Naive thymus-derived CD4-positive, alpha-beta T cell (primary cell): ENCODE measurements at regions of chr12 and their contacts with region 1.

Region 1: DNA sequence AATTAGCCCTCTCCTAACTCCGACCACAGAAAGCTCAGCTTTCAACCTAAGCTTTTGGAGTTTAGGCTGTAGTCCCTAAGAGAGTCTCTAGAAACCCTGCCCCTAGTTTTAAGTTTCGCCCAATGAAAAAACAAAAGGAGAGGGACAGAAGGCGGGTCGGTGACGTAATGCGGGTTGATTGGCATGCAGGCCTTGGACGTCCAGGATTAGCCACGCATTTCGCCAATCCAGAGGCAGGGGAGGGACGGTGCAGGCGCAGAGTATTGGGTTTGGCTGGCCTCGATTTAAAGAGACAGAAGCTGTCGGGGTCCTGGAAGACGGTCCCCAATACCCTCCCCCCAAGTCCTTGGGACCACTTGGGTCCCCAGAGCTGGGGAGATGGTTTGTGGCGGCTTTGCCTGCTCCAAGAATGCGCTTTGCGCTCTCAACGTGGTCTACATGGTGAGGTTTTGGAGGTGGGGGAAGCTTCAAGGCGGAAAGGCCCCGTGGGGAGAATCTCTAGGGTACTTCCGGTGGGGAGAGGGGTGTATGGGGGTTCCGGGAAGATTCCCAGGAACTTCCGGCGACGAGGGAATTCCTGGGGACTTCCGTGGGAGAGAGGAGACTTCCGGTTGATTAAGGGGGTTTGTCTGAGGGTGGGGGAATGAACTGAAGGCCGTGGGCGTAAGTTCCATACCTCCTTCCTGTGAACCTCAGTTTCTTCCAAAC is at the start of gene TSPAN31:
- DNase-seq: peak; percentile 70 to 97 (median 94)
- ATAC-seq: peak; percentile 89
- H3K4me3 ChIP-seq: peak within 1 kb of the TSS; percentile 92
- H3K4me3 Mint-ChIP-seq: peak within 1 kb of the TSS; percentile 82 to 100 (median 91)
- H3K27ac ChIP-seq: peak within 1 kb of the TSS; percentile 91
- H3K27ac Mint-ChIP-seq: peak within 1 kb of the TSS; percentile 88 to 97 (median 95)
- H3K4me1 ChIP-seq: peaks cover 33 to 34% of the 10 kb centered on the region in 2 donors
- H3K4me1 Mint-ChIP-seq: peaks cover 35 to 64% (median 52%) of the 10 kb centered on the region in 7 donors
- H3K27me3 ChIP-seq: no peaks in the 10 kb centered on the region
- H3K27me3 Mint-ChIP-seq: no peaks in the 10 kb centered on the region
- total RNA-seq, gene TSPAN31: 12.3 to 23.9 (median 20.3) TPM

Region 2: GRCh38 chr12:57476162-57476992 is 268.6 kb before region 1 on chr12:
- CTCF ChIA-PET with region 1: no interaction called
- POLR2A ChIA-PET with region 1: no interaction called
- intact Hi-C with region 1: loop called (anchors 5 kb)
- DNase-seq: peak; percentile 58 to 85 (median 70)
- ATAC-seq: peak; percentile 53
- H3K4me3 ChIP-seq: peak overlapping the region; percentile 95
- H3K4me3 Mint-ChIP-seq: peak overlapping the region; percentile 84 to 100 (median 98)
- H3K27ac ChIP-seq: peak overlapping the region; percentile 94
- H3K27ac Mint-ChIP-seq: peak overlapping the region; percentile 97 to 100 (median 100)
- H3K4me1 ChIP-seq: peaks cover 59 to 70% of the 10 kb centered on the region in 2 donors
- H3K4me1 Mint-ChIP-seq: peaks cover 66 to 85% (median 76%) of the 10 kb centered on the region in 7 donors
- H3K27me3 ChIP-seq: no peaks in the 10 kb centered on the region
- H3K27me3 Mint-ChIP-seq: no peaks in the 10 kb centered on the region

Region 3: DNA sequence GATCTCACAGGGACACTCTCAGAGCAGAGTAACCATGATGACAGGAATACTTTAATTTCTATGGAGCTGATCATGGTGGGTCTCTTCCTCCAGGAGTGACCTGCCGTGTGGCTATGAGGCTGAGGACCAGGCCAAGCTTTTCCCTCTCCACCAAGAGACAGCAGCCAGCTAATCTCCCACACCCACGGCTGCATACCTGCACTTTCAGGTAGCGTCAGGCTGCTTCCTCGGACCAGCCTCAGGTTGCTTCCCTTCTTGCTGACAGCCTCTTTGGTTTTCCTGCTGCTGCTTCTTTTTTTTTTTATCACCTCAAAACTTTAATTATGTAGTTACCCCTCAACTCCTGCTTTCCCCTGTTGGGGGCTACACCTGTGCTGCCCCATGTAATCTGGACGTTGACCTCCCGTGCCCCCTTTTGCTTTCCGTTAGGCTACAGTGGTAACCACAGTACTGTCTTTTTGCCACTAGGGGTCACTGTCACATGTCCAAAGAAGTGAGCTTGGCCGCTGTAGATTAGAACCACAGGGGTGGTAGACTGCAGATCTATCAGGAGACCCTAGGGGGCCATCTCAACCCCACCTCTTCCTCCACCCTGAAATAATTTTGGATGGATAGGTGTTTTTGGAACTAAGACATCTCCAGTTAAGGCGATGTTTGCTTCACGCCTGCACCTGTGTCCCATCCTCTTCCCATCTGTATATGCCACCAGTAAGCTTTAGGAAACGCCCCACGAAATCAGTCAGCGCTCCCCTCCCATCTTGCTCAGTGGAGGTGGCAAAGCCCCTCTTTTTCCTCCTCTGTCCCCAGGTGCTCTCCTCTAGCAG is 161.7 kb before region 1 on chr12:
- CTCF ChIA-PET with region 1: interaction called, 5 read pairs
- POLR2A ChIA-PET with region 1: no interaction called
- intact Hi-C with region 1: loop called (anchors 1 kb)
- DNase-seq: peak; percentile 24 to 79 (median 71)
- ATAC-seq: peak; percentile 100
- H3K4me3 ChIP-seq: no peak overlapping the region
- H3K4me3 Mint-ChIP-seq: no peak overlapping the region
- H3K27ac ChIP-seq: no peak overlapping the region
- H3K27ac Mint-ChIP-seq: peak overlapping the region in 1 of 9 donors; percentile 78
- H3K4me1 ChIP-seq: no peaks in the 10 kb centered on the region
- H3K4me1 Mint-ChIP-seq: peaks cover 5 to 15% (median 6%) of the 10 kb centered on the region in 7 donors
- H3K27me3 ChIP-seq: no peaks in the 10 kb centered on the region
- H3K27me3 Mint-ChIP-seq: peaks cover 0 to 18% (median 14%) of the 10 kb centered on the region in 5 donors

Region 4: DNA sequence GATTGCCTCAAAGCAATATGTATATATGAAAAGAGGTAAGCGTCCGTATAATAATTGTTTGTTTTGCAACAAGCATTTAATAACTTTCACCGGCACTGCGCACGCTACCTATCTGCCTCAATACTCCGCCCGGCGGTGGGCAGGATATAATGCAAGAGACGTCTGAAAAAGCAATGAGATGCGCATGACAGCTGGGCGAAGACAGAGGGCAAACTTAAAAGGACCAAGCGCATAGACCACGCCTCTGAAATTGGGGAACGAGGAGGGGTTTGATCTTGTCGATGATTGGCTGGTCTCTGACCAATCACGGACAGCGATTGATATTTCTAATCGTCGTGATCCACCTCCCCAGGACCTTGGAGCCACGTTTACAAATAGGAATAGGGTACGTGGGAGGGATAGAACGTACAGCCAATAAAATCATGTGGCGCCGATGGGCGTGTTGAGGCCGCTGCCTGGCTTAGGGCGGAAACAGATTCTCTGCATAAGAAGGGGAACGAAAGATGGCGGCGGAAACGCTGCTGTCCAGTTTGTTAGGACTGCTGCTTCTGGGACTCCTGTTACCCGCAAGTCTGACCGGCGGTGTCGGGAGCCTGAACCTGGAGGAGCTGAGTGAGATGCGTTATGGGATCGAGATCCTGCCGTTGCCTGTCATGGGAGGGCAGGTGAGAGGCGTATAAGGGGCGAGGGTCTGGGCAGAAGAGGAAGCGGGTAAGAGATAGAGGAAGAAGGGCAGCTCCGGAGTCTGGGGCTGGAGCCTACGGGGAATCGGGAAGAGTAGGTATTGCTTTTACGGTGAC is 51.1 kb before region 1 on chr12 and contains the start of gene OS9:
- CTCF ChIA-PET with region 1: interaction called, 3 read pairs
- POLR2A ChIA-PET with region 1: interaction called, 4 read pairs
- intact Hi-C with region 1: loop called (anchors 1 kb)
- DNase-seq: peak; percentile 76 to 99 (median 98)
- ATAC-seq: peak; percentile 96
- H3K4me3 ChIP-seq: peak within 1 kb of the TSS; percentile 92
- H3K4me3 Mint-ChIP-seq: no peak within 1 kb of the TSS
- H3K27ac ChIP-seq: peak within 1 kb of the TSS; percentile 83
- H3K27ac Mint-ChIP-seq: no peak within 1 kb of the TSS
- H3K4me1 ChIP-seq: peaks cover 10 to 23% of the 10 kb centered on the region in 2 donors
- H3K4me1 Mint-ChIP-seq: peaks cover 2 to 14% (median 7%) of the 10 kb centered on the region in 7 donors
- H3K27me3 ChIP-seq: no peaks in the 10 kb centered on the region
- H3K27me3 Mint-ChIP-seq: peaks cover 0 to 18% (median 7%) of the 10 kb centered on the region in 5 donors
- total RNA-seq, gene OS9: 139 to 175 (median 171) TPM

Region 5: GRCh38 chr12:57771708-57772428 is 26.9 kb after region 1 on chr12 and contains the start of gene METTL1:
- CTCF ChIA-PET with region 1: interaction called, 4 read pairs
- POLR2A ChIA-PET with region 1: interaction called, 4 read pairs
- intact Hi-C with region 1: loop called in 1 of 2 experiments (anchors 1 kb)
- DNase-seq: peak; percentile 70 to 91 (median 86)
- ATAC-seq: peak; percentile 92
- H3K4me3 ChIP-seq: peak within 1 kb of the TSS; percentile 99
- H3K4me3 Mint-ChIP-seq: peak within 1 kb of the TSS; percentile 88 to 97 (median 94)
- H3K27ac ChIP-seq: peak within 1 kb of the TSS; percentile 90
- H3K27ac Mint-ChIP-seq: peak within 1 kb of the TSS; percentile 74 to 98 (median 97)
- H3K4me1 ChIP-seq: peaks cover 6 to 13% of the 10 kb centered on the region in 2 donors
- H3K4me1 Mint-ChIP-seq: peaks cover 21 to 35% (median 25%) of the 10 kb centered on the region in 7 donors
- H3K27me3 ChIP-seq: no peaks in the 10 kb centered on the region
- H3K27me3 Mint-ChIP-seq: peaks cover 0 to 3% (median 2%) of the 10 kb centered on the region in 5 donors
- total RNA-seq, gene METTL1: 11.8 to 30.9 (median 16.0) TPM